Activated naive CD4-positive, alpha-beta T cell treated with anti-CD3 and anti-CD28 coated beads for 36 hours (primary cell): ENCODE measurements at regions of chr9 and their contacts with region 1.

Region 1: DNA sequence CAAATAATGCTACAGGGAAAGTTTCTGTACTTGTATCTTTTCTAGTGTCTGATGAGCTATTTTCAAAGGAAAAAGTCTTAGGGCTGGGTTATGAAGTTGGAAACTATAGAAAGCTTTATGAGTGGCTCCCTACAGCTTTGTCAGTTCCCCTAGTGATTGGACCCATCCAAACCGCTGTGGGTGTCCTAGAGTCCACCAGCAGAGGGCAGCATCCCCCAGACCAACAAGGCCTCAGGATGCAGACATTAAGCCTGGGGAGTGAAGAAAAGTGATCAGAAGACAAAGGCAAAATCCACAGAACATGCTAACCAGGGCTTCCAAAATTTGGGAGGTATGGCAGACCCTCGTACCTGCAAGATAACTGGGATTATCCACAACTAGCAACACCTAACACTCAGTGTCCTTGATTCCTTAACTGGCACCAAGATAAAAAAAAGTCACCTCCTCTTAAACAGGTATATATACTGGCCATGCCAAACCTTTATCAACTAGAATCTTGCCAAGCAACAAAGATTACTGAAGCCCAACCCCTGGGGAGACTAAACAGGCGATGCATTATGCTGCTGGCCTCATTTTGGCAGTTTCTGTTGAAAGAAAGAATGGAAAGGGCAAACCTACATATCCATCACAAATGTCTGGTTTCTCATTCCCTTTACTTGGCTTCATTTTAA is 110.4 kb upstream of the NR5A1 start:
- DNase-seq: peak; percentile 89
- H3K4me3 Mint-ChIP-seq: no peak overlapping the region
- H3K27ac Mint-ChIP-seq: no peak overlapping the region
- H3K4me1 Mint-ChIP-seq: no peaks in the 10 kb centered on the region
- H3K27me3 Mint-ChIP-seq: no peaks in the 10 kb centered on the region

Region 2: GRCh38 chr9:124218438-124218982 is 399.1 kb before region 1 on chr9:
- CTCF ChIA-PET with region 1: no interaction called
- intact Hi-C with region 1: no loop called
- DNase-seq: peak; percentile 66
- H3K4me3 Mint-ChIP-seq: no peak overlapping the region
- H3K27ac Mint-ChIP-seq: no peak overlapping the region
- H3K4me1 Mint-ChIP-seq: peaks cover 31% of the 10 kb centered on the region
- H3K27me3 Mint-ChIP-seq: no peaks in the 10 kb centered on the region

Region 3: GRCh38 chr9:124551472-124552272 is 65.9 kb before region 1 on chr9:
- CTCF ChIA-PET with region 1: interaction called, 13 read pairs
- intact Hi-C with region 1: no loop called
- DNase-seq: peak; percentile 62
- H3K4me3 Mint-ChIP-seq: no peak overlapping the region
- H3K27ac Mint-ChIP-seq: no peak overlapping the region
- H3K4me1 Mint-ChIP-seq: peaks cover 18% of the 10 kb centered on the region
- H3K27me3 Mint-ChIP-seq: no peaks in the 10 kb centered on the region

Region 4: DNA sequence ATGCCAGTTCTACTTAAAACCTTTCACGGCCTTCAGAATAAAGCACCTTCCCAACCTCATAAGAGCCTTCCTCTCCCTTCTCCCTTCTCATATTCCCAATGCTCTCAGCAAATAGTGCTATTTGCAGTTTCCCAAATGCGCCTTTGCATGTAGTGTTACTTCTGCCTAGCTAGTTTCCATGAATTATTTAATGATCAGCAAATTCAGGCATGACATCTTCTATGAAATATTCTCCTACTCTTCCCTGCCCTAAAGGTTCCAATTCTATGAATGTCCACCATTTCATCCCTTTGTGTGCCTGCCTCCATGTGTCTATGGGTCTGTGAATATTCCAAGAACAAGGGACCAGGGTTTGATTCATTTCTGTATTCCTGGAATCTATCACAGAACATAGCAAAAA is 11.6 kb before region 1 on chr9:
- CTCF ChIA-PET with region 1: interaction called, 10 read pairs
- intact Hi-C with region 1: no loop called
- DNase-seq: no peak
- H3K4me3 Mint-ChIP-seq: no peak overlapping the region
- H3K27ac Mint-ChIP-seq: no peak overlapping the region
- H3K4me1 Mint-ChIP-seq: no peaks in the 10 kb centered on the region
- H3K27me3 Mint-ChIP-seq: no peaks in the 10 kb centered on the region

Region 5: DNA sequence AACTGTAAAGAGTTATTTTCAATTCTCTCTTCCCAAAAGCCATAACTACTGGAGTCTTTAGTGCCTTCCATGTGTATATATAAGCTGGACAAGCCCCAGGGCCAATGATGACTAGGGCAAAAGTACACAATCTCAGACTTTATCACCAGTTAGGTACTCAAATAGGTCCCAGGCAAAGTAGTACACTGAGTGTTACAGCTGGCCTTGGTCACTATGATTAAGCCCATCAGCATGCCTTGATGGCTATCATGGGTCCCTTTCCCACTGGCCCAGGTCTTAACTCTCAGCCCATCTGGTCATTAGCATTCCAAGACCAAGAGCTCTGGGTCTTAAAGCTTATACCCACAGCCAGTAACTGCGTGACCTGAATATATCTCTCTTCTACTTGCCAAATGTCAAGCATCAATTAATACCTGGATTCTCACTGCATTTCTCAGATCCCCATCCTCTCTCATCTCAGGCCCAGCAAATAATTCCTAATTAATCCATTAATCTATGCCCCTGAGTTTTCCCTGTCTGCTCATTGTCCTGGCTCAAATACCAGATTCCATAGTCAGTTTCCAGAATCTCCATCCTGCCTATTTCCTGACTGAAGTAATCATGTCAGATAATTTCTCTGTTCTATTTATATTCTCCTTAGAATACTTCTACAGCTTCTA is 91.2 kb after region 1 on chr9:
- CTCF ChIA-PET with region 1: interaction called, 115 read pairs
- intact Hi-C with region 1: loop called (anchors 1 kb)
- DNase-seq: no peak
- H3K4me3 Mint-ChIP-seq: no peak overlapping the region
- H3K27ac Mint-ChIP-seq: no peak overlapping the region
- H3K4me1 Mint-ChIP-seq: no peaks in the 10 kb centered on the region
- H3K27me3 Mint-ChIP-seq: peaks cover 3% of the 10 kb centered on the region

Region 6: GRCh38 chr9:124754289-124754688 is 136.7 kb after region 1 on chr9:
- CTCF ChIA-PET with region 1: interaction called, 4 read pairs
- intact Hi-C with region 1: loop called (anchors 1 kb)
- DNase-seq: no peak
- H3K4me3 Mint-ChIP-seq: no peak overlapping the region
- H3K27ac Mint-ChIP-seq: no peak overlapping the region
- H3K4me1 Mint-ChIP-seq: peaks cover 19% of the 10 kb centered on the region
- H3K27me3 Mint-ChIP-seq: peaks cover 52% of the 10 kb centered on the region